PC-9 (cell line): ENCODE measurements at regions of chr3 and their contacts with region 1.

Region 1: GRCh38 chr3:14467814-14468620 is 65.6 kb downstream of the SLC6A6 start:
- DNase-seq: no peak
- H3K4me3 ChIP-seq: no peak overlapping the region
- H3K27ac ChIP-seq: no peak overlapping the region
- H3K4me1 ChIP-seq: peaks cover 12% of the 10 kb centered on the region
- H3K27me3 ChIP-seq: no peaks in the 10 kb centered on the region
- CTCF ChIP-seq: peak; percentile 93

Region 2: GRCh38 chr3:14113965-14114635 is 353.9 kb before region 1 on chr3:
- CTCF ChIA-PET with region 1: interaction called, 10 read pairs
- POLR2A ChIA-PET with region 1: no interaction called
- intact Hi-C with region 1: no loop called
- DNase-seq: peak in 1 of 2 experiments; percentile 42
- H3K4me3 ChIP-seq: no peak overlapping the region
- H3K27ac ChIP-seq: no peak overlapping the region
- H3K4me1 ChIP-seq: peaks cover 9% of the 10 kb centered on the region
- H3K27me3 ChIP-seq: no peaks in the 10 kb centered on the region
- CTCF ChIP-seq: peak; percentile 62

Region 3: GRCh38 chr3:14345308-14346150 is 122.5 kb before region 1 on chr3:
- CTCF ChIA-PET with region 1: interaction called, 11 read pairs
- POLR2A ChIA-PET with region 1: no interaction called
- intact Hi-C with region 1: no loop called
- DNase-seq: peak; percentile 32 to 56
- H3K4me3 ChIP-seq: no peak overlapping the region
- H3K27ac ChIP-seq: peak overlapping the region; percentile 27; the same call in 1 of the 2 replicates
- H3K4me1 ChIP-seq: peaks cover 22% of the 10 kb centered on the region
- H3K27me3 ChIP-seq: no peaks in the 10 kb centered on the region
- CTCF ChIP-seq: no peak

Region 4: GRCh38 chr3:14413381-14414071 is 54.5 kb before region 1 on chr3:
- CTCF ChIA-PET with region 1: no interaction called
- POLR2A ChIA-PET with region 1: no interaction called
- intact Hi-C with region 1: no loop called
- DNase-seq: peak; percentile 54 to 56
- H3K4me3 ChIP-seq: no peak overlapping the region
- H3K27ac ChIP-seq: peak overlapping the region; percentile 99
- H3K4me1 ChIP-seq: peaks cover 85% of the 10 kb centered on the region
- H3K27me3 ChIP-seq: no peaks in the 10 kb centered on the region
- CTCF ChIP-seq: no peak

Region 5: DNA sequence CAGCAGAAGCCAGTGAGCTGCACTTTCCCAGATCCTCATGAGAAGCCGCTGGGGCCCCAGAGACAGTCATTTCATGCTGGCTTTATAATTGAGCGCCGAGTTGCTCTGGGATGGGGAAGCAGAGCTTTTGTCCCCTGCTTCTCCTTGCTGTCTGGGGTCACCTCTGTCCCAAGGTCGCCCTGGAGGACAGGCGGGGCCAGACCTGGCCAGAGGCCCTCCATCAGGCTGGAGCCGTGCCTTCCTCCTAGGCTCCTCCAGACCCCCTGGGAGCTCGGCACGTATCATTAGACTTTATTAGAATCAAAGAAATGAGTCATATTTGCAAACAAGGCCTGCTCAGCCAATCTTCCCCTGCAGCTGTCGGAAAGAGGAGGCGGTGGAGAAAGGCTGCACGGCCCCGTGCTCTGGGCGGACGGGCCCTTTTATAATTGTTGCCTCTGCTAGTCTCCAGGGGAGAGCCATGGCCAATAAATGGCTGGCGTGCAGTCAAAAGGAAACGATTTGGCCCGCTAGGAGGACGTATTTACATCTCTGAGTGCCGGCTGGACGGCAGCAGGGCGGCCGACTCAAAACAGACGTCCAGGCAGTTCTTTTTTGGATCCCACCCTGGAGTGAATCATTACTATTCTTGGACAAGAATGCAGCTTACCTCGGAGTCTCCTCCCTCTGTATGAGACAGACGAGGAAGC is 15.2 kb before region 1 on chr3:
- CTCF ChIA-PET with region 1: interaction called, 5 read pairs
- POLR2A ChIA-PET with region 1: interaction called, 13 read pairs
- intact Hi-C with region 1: no loop called
- DNase-seq: peak; percentile 71 to 85
- H3K4me3 ChIP-seq: no peak overlapping the region
- H3K27ac ChIP-seq: peak overlapping the region; percentile 72
- H3K4me1 ChIP-seq: peaks cover 29% of the 10 kb centered on the region
- H3K27me3 ChIP-seq: no peaks in the 10 kb centered on the region
- CTCF ChIP-seq: 0 out of 2 replicates have a peak, but pooled peaks have one; percentile 13